Activated CD4-positive, alpha-beta T cell treated with anti-CD3 and anti-CD28 coated beads, Interleukin-2, amount 10 ng/mL, durations not matched to agents 24 days and 14 days (primary cell): ENCODE measurements at regions of chr3 and their contacts with region 1.

Region 1: DNA sequence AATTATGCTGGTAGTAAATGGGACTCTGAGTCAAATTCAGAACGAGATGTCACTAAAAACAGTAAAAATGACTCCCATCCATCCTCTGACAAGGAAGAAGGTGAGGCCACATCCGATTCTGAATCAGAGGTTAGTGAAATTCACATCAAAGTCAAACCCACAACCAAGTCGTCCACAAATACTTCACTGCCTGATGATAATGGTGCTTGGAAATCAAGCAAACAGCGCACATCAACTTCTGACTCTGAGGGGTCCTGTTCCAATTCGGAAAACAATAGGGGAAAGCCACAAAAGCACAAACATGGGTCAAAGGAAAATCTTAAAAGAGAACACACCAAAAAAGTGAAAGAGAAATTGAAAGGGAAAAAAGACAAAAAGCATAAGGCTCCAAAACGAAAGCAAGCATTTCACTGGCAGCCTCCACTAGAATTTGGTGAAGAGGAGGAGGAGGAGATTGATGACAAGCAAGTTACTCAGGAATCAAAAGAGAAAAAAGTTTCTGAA is 15.1 kb upstream of the ZBTB47 start:
- DNase-seq: peak; percentile 89
- H3K4me3 Mint-ChIP-seq: no peak overlapping the region
- H3K27ac Mint-ChIP-seq: no peak overlapping the region
- H3K4me1 Mint-ChIP-seq: peaks cover 17% of the 10 kb centered on the region
- H3K27me3 Mint-ChIP-seq: no peaks in the 10 kb centered on the region

Region 2: DNA sequence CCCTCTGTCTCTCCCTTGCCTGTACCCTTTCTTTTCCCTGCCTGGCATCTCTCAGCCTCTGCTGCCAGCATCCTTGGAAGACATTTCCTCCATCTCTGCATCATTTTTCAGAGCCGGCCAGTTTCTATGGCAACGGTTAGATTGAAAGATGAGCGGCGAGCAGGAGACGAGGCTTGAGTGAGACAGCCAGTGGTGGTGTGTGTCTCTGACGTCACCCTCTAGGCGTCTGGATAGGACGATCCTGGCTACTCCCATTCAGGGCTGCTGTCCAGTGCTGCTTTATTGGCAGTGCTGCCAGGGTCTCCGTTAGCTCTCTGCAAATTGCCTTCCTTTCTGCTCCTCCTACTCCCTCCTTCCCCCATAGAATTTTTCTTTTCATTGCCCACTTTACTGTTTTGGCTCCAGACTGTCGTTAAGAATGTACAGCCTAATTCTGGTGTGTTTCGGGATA is 489.4 kb before region 1 on chr3:
- intact Hi-C with region 1: no loop called
- DNase-seq: no peak
- H3K4me3 Mint-ChIP-seq: no peak overlapping the region
- H3K27ac Mint-ChIP-seq: no peak overlapping the region
- H3K4me1 Mint-ChIP-seq: peaks cover 23% of the 10 kb centered on the region
- H3K27me3 Mint-ChIP-seq: no peaks in the 10 kb centered on the region

Region 3: GRCh38 chr3:42581709-42582473 is 56.5 kb before region 1 on chr3 and contains the start of gene SEC22C:
- intact Hi-C with region 1: loop called (anchors 1 kb)
- DNase-seq: peak; percentile 98
- H3K4me3 Mint-ChIP-seq: peak within 1 kb of the TSS; percentile 93
- H3K27ac Mint-ChIP-seq: peak within 1 kb of the TSS; percentile 93
- H3K4me1 Mint-ChIP-seq: peaks cover 52% of the 10 kb centered on the region
- H3K27me3 Mint-ChIP-seq: no peaks in the 10 kb centered on the region
- total RNA-seq, gene SEC22C: 36.3 and 39.6 TPM in 2 replicates

Region 4: GRCh38 chr3:42600111-42600988 is 38.0 kb before region 1 on chr3 and contains the start of gene NKTR:
- intact Hi-C with region 1: loop called (anchors 1 kb)
- DNase-seq: peak; percentile 100
- H3K4me3 Mint-ChIP-seq: peak within 1 kb of the TSS; percentile 94
- H3K27ac Mint-ChIP-seq: peak within 1 kb of the TSS; percentile 98
- H3K4me1 Mint-ChIP-seq: peaks cover 30% of the 10 kb centered on the region
- H3K27me3 Mint-ChIP-seq: no peaks in the 10 kb centered on the region
- total RNA-seq, gene NKTR: 79.5 and 80.9 TPM in 2 replicates

Region 5: GRCh38 chr3:42613462-42613861 is 24.9 kb before region 1 on chr3:
- intact Hi-C with region 1: no loop called
- DNase-seq: no peak
- H3K4me3 Mint-ChIP-seq: no peak overlapping the region
- H3K27ac Mint-ChIP-seq: no peak overlapping the region
- H3K4me1 Mint-ChIP-seq: peaks cover 35% of the 10 kb centered on the region
- H3K27me3 Mint-ChIP-seq: no peaks in the 10 kb centered on the region

Region 6: DNA sequence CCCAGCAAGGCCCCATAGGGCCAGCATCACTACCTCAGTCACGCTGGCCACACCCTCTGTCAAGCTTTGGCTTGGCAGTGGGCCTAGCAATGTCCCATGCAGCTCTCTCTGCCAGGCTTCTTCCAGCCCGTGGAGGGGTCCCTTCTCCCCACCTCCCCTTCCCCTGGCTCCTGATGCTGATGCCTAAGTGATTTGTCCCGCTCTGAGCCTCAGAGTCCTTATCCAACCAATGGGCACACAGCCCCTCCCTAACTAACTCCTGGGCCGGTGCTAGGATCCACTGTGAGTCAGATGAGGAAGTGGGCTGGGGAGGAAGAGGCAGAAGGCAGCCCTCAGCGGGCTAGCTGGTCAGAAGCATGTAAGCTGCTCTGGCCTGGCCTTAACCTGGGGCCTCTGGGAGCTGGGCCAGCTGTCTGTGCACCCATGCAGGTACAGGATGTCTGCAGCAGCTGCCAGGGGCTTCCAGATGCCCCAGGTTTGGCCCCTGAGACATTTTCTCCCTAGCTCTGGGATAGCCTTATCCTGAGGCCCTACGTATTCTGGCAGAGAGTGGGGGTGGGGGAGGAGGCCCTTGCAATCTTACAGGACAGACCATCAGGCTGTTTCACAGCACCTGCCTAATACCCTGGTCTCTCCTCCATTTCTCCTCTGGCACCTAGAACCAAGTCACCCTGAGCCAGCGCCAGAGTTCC is 14.4 kb after region 1 on chr3:
- intact Hi-C with region 1: loop called (anchors 2 kb)
- DNase-seq: no peak
- H3K4me3 Mint-ChIP-seq: peak overlapping the region; percentile 87
- H3K27ac Mint-ChIP-seq: peak overlapping the region; percentile 38
- H3K4me1 Mint-ChIP-seq: peaks cover 19% of the 10 kb centered on the region
- H3K27me3 Mint-ChIP-seq: peaks cover 5% of the 10 kb centered on the region

Region 7: GRCh38 chr3:42683875-42684598 is 45.6 kb after region 1 on chr3:
- intact Hi-C with region 1: loop called (anchors 1 kb)
- DNase-seq: no peak
- H3K4me3 Mint-ChIP-seq: no peak overlapping the region
- H3K27ac Mint-ChIP-seq: no peak overlapping the region
- H3K4me1 Mint-ChIP-seq: peaks cover 2% of the 10 kb centered on the region
- H3K27me3 Mint-ChIP-seq: peaks cover 10% of the 10 kb centered on the region

Region 8: DNA sequence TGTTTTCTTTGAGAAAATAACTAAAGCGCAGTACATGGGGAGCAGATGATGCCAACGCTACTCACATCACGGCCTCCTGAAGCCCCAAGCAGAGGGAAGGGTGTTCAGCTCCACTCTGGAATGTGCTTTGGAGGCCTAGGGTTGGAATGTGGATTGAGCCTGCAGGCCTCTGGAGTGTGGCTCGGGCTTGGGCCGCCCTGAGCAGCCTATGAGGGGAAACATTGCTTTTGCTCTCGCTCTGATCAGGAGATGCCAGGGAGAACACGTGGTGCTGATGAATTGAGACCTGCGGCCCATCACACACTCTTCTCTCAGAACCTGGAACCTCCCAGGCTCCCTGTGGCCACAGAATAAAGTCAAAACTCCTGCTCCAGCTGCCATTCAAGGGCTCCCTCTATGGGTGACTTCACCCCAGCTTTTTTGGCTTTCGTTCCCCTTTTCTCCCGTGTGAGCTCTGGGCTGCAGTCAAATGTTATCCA is 111.4 kb after region 1 on chr3:
- intact Hi-C with region 1: loop called (anchors 5 kb)
- DNase-seq: peak; percentile 71
- H3K4me3 Mint-ChIP-seq: no peak overlapping the region
- H3K27ac Mint-ChIP-seq: no peak overlapping the region
- H3K4me1 Mint-ChIP-seq: peaks cover 22% of the 10 kb centered on the region
- H3K27me3 Mint-ChIP-seq: peaks cover 4% of the 10 kb centered on the region

Region 9: DNA sequence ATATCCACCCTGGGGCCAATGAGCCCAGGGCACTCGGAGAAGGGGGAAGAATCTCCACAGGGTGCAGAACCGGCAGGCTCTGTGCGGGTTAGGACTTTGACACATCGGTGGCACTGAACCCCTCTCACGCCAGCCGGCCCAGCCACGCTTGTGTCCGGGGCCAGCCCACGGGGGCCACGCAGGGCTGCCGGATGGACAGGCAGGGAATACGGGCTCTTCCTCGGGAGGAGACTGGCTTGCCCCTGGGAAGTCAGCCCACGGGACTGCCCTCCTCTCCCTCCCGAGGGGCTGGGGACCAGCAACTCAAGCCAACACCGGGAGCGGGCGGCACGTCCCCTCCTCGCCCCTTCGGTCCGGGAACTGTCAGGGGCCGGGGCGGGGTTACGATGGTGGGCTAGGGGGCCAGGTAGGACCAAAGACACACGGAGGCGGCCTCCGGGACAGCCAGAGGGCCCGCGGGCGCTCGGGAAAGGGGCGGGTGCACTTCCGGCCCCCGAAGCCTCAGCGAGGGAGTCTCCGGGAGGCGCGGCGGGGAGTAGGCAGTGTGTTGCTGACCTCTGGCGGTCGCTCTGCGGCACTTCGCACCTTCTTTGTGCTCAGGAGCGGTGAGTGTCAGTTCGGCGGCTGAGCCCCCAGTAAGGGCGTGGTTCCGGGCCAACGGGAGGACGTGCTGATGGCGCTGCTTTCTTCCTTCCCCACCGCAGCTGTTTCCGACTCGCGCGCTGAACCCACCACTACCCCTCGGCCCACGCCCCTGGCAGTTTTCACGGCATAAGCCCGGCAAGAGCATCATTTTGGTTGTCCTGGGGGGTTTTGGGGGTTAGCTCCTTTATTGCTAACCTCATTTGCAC is 242.4 kb after region 1 on chr3:
- intact Hi-C with region 1: loop called (anchors 2 kb)
- DNase-seq: peak; percentile 96
- H3K4me3 Mint-ChIP-seq: peak overlapping the region; percentile 87
- H3K27ac Mint-ChIP-seq: peak overlapping the region; percentile 85
- H3K4me1 Mint-ChIP-seq: peaks cover 11% of the 10 kb centered on the region
- H3K27me3 Mint-ChIP-seq: peaks cover 12% of the 10 kb centered on the region

Region 10: DNA sequence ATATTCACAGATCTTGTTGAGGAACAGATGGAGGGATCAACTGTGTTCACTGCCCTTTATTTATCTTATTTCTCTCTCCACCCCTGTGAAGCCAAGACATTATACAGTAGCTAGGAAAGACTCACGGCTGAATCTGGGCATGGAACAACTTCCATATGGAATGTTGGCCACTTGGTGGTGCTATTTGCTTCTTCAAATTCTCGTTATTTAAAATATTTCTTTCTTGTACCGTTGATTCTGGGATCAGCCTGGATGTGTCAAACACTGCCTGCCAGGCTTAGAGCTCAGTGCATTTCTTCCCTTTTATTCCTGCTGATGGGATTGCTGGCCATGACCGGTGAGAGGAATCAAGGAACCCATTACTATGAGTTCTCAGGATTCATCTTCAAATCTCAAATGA is 323.2 kb after region 1 on chr3:
- intact Hi-C with region 1: no loop called
- DNase-seq: peak; percentile 64
- H3K4me3 Mint-ChIP-seq: no peak overlapping the region
- H3K27ac Mint-ChIP-seq: no peak overlapping the region
- H3K4me1 Mint-ChIP-seq: peaks cover 2% of the 10 kb centered on the region
- H3K27me3 Mint-ChIP-seq: peaks cover 10% of the 10 kb centered on the region